ENCODE measurements at regions of chr10 and their contacts with region 1.

Region 1: GRCh38 chr10:94545391-94546048 is at the start of gene HELLS:
- DNase-seq: peak; percentile 90
- H3K4me3 ChIP-seq: peak within 1 kb of the TSS; percentile 84 to 88 (median 86)
- H3K27ac ChIP-seq: peak within 1 kb of the TSS; percentile 57
- H3K4me1 ChIP-seq: peaks cover 19% of the 10 kb centered on the region
- H3K27me3 ChIP-seq: no peaks in the 10 kb centered on the region
- CTCF ChIP-seq: no peak
- POLR2A ChIP-seq: no peak
- total RNA-seq, gene HELLS: 72.6 and 85.5 TPM in 2 replicates

Region 2: GRCh38 chr10:93702211-93703001 is 843.1 kb before region 1 on chr10 and contains the start of gene FRA10AC1:
- CTCF ChIA-PET with region 1: no interaction called
- POLR2A ChIA-PET with region 1: no interaction called
- dilution Hi-C with region 1: no loop called
- intact Hi-C with region 1: loop called (anchors 10 kb)
- DNase-seq: peak; percentile 91
- H3K4me3 ChIP-seq: peak within 1 kb of the TSS; percentile 68 to 94 (median 88)
- H3K27ac ChIP-seq: peak within 1 kb of the TSS; percentile 74
- H3K4me1 ChIP-seq: peaks cover 9% of the 10 kb centered on the region
- H3K27me3 ChIP-seq: peaks cover 0 to 4% of the 10 kb centered on the region in 2 experiments
- CTCF ChIP-seq: peak; percentile 12 to 21
- POLR2A ChIP-seq: no peak
- total RNA-seq, gene FRA10AC1: 17.2 and 24.4 TPM in 2 replicates

Region 3: GRCh38 chr10:94362360-94363250 is 182.9 kb before region 1 on chr10 and contains the start of gene NOC3L:
- CTCF ChIA-PET with region 1: no interaction called
- POLR2A ChIA-PET with region 1: no interaction called
- dilution Hi-C with region 1: no loop called
- intact Hi-C with region 1: loop called (anchors 5 kb)
- DNase-seq: peak; percentile 92
- H3K4me3 ChIP-seq: peak within 1 kb of the TSS; percentile 46 to 87 (median 74)
- H3K27ac ChIP-seq: peak within 1 kb of the TSS; percentile 37
- H3K4me1 ChIP-seq: peaks cover 14% of the 10 kb centered on the region
- H3K27me3 ChIP-seq: peaks cover 3 to 7% of the 10 kb centered on the region in 2 experiments
- CTCF ChIP-seq: peak; percentile 75
- POLR2A ChIP-seq: peak; percentile 90
- total RNA-seq, gene NOC3L: 19.8 and 20.5 TPM in 2 replicates

Region 4: DNA sequence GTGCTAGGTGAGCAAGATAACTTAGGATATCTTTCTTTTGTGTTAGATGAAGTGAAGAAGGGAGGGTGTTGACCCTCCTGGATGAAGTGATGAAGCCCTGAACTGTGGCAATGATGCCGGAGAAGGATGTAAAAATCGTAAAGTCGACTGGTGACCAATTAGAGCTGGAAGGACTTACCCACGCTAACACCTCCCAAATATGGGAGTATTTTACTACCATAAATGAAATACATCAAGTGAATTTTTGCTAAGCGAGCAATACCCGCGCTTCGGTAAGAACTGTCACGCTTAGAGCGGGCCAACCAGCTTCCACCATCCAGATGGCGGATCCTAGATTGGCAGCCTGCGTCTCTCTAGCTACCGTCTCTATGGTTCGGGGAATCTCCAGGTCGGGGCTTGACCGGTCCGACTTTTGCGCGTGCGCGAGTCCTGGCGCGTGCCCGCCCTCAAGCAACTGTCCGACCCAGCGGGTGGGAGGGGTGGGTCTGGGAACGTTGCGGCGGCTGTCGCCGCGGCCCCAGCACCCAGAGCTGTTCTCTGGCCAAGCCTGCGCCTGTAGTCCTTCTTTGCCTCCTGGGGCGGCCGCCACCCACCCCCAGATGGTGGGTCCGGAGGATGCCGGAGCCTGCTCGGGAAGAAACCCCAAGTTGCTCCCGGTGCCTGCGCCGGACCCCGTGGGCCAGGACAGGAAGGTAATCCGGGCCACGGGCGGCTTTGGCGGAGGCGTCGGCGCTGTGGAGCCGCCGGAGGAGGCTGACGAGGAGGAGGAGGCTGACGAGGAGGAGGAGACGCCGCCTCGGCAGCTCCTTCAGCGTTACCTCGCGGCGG is 143.3 kb before region 1 on chr10 and contains the start of gene TBC1D12:
- CTCF ChIA-PET with region 1: interaction called, 3 read pairs
- POLR2A ChIA-PET with region 1: interaction called, 3 read pairs
- dilution Hi-C with region 1: no loop called
- intact Hi-C with region 1: loop called (anchors 1 kb)
- DNase-seq: peak; percentile 96
- H3K4me3 ChIP-seq: peak within 1 kb of the TSS; percentile 71 to 95 (median 82)
- H3K27ac ChIP-seq: peak within 1 kb of the TSS; percentile 67
- H3K4me1 ChIP-seq: peaks cover 3% of the 10 kb centered on the region
- H3K27me3 ChIP-seq: no peaks in the 10 kb centered on the region
- CTCF ChIP-seq: no peak
- POLR2A ChIP-seq: peak; percentile 83
- total RNA-seq, gene TBC1D12: 7.1 and 7.3 TPM in 2 replicates

Region 5: DNA sequence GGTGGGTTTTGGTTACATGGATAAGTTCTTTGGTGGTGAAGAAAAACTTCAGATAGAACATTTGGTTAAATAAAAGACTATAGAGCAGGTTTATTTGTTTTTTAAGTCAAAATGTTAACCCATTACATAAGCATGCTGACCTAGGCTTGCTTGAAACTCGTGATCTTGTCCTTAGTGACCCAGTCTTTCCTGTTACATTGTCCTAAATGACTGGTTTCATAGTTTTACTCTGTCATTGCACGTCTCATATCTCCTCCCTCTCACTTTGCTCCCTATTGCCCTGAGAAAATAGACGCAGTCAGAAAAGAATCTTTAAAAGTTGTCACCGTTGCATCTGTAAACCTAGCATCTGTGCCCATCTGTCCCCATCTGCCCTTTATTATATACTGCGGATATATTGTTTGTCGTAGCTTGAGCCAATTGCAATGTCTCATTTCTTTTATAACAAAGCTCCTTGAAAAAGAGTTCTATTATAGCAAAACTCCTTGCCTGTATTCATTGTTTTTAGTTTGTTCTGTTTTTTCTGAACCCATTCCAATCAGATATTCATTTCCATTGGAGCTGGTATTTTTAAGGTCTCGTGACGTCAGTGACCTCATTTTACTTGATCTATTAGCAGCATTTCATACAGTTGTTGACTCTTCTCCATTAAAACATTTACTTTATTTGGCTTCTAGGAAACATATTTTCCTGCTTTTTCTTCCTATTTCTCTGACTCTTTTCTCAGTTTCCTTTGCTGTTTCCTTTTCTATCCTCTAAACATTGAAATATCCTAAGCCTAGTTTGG is 57.4 kb after region 1 on chr10:
- CTCF ChIA-PET with region 1: no interaction called
- POLR2A ChIA-PET with region 1: no interaction called
- dilution Hi-C with region 1: no loop called
- intact Hi-C with region 1: loop called (anchors 1 kb)
- DNase-seq: peak; percentile 89
- H3K4me3 ChIP-seq: peak overlapping the region in 1 of 3 experiments; percentile 48
- H3K27ac ChIP-seq: peak overlapping the region; percentile 64
- H3K4me1 ChIP-seq: peaks cover 22% of the 10 kb centered on the region
- H3K27me3 ChIP-seq: no peaks in the 10 kb centered on the region
- CTCF ChIP-seq: no peak
- POLR2A ChIP-seq: no peak

Measured in endothelial cell of umbilical vein (primary cell).